SK-MEL-5 (cell line): ENCODE measurements at regions of chr1 and their contacts with region 1.

Region 1: DNA sequence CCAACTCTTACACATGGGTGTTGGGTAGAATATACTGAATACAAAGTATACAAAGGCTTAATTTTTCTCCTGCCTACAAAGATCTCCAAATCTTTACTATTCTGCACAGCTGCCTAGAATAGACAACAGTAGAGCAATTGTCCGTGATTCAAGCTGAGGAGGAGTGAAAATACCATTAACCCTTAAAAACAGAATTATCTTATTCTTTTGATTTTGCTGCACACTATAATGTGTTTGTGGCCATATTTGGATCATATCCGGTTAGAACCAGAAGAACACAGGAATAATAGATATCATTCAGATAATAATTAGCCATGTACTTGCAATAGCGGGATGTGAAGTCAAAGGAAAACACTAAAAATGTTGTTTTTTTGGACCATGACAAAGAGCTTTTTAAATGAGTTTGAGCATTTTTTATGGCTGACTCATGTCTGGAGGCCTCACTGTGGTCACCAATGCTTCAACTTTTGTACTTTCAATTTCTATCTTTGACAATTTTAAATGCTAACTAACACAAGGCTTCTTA is 197.6 kb upstream of the FOXD3 start:
- DNase-seq: peak; percentile 99

Region 2: GRCh38 chr1:63004868-63005267 is 119.9 kb before region 1 on chr1:
- in situ Hi-C with region 1: loop called (anchors 25 kb)
- DNase-seq: peak; percentile 71

Region 3: GRCh38 chr1:63327417-63328139 is 202.8 kb after region 1 on chr1:
- in situ Hi-C with region 1: no loop called
- DNase-seq: peak; percentile 62